ENCODE measurements at regions of chr3 and their contacts with region 1.

Region 1: DNA sequence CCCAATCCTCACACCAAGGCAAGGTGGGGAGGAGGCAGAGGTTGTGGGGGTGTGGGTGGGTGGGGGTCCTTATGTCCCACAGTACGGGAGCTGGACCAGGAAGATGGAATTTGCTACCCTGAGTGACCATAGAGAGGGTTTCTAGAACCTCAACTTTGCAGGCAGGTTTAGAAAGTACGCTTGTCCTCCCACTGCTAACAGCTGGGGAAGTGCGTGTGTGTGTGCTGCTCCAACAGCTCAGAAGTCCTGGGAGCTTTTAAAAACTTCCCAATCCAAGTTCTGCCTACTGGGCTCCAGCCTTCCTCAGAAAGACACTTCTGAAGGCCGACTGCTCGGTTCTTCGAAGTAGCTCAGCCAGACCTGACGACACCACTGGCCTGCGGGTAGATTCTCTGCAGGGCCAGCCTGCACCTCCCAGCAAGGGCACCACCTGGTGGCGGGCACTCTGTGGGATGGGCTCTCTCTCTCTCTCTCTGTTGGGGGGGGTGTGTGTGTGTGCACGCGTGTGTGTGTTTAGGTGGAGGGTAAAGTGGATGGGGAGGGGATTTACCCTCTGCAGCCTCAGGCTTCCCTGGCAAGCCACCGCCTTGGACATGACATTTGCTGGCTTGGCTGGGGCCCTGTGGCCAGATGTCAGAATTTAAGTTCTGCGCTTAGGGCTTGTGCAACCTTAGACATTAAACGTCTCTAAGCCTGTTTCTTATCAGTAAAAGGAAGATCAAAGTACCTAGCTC is 15.6 kb downstream of the TMEM158 start:
- DNase-seq: peak; percentile 85
- H3K4me3 Mint-ChIP-seq: no peak overlapping the region
- H3K27ac Mint-ChIP-seq: no peak overlapping the region
- H3K4me1 Mint-ChIP-seq: peaks cover 44% of the 10 kb centered on the region
- H3K27me3 Mint-ChIP-seq: peaks cover 29% of the 10 kb centered on the region

Region 2: DNA sequence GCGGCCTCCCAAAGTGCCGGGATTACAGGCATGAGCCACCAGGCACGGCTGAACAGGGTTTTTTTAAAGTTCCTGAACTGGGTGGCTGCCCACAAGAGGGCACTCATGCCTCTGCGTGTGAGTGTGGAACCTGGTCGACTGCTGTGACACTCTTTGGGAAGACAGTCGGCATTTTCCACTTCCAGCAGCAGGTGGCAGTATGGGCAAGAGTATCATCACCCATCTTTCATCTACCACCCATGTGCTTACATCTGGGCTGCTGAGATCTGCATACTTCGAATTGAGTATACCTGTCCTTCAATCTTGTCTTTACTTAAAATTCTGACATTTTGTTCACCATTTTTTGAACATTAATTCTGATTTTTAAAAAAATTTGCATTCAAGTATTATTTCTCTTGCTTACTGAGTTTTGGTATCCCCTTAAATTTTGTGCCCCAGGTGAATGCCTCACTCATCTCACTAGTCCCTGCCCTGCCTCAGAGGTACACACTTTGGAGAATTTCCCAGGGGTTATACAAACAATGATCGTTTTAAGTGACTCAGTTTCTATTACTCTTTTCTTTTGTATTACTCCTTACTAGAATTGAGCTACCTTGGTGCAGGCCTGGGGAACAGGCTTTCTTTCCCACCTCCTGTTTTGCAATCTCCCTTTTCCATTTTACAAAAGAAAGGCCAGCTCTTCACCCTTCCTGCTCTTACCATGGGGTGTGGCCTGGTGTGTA is 172.6 kb before region 1 on chr3:
- CTCF ChIA-PET with region 1: interaction called, 103 read pairs
- POLR2A ChIA-PET with region 1: interaction called, 3 read pairs
- DNase-seq: peak; percentile 96
- H3K4me3 Mint-ChIP-seq: peak overlapping the region; percentile 9
- H3K27ac Mint-ChIP-seq: peak overlapping the region; percentile 46
- H3K4me1 Mint-ChIP-seq: peaks cover 57% of the 10 kb centered on the region
- H3K27me3 Mint-ChIP-seq: peaks cover 31% of the 10 kb centered on the region

Region 3: GRCh38 chr3:45043728-45044299 is 166.7 kb before region 1 on chr3:
- CTCF ChIA-PET with region 1: interaction called, 103 read pairs
- POLR2A ChIA-PET with region 1: interaction called, 3 read pairs
- DNase-seq: no peak
- H3K4me3 Mint-ChIP-seq: no peak overlapping the region
- H3K27ac Mint-ChIP-seq: no peak overlapping the region
- H3K4me1 Mint-ChIP-seq: peaks cover 29% of the 10 kb centered on the region
- H3K27me3 Mint-ChIP-seq: peaks cover 33% of the 10 kb centered on the region

Region 4: DNA sequence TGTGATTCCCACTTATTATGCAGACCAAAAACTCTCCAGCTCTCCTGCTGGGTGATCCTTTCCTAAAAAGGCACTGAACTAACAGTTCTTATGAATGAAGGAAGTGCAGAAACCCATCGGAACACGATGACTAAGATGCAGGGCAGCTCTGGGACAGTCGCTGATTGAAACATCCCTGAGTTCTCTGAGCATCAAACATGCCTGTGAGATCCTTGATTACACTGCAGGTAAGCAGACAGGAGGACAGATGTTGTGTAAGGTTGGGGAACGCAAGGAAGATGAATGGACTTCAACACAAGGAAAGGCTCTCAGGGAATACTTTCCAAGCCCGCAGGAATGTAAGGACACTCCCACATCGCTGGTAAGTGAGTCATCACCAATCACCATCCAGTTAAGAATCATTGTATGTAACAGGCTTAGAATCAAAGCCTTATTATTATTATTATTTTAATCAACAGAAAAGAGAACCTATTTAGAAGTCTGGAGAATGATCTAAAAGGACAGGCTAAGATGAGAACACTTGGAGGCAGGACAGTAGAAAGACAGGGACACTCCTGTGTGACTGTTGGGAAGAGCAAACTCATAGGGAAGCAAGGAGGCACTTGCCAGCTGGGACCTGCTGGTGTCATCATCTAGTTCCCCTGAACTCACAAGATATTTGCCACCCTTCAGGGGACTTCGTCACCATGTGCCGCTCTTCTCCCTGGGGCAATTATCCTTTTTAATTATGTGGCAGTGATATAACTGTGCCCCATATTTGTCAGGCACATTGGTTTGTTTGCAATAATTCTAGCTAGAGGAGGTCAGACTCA is 10.4 kb before region 1 on chr3:
- CTCF ChIA-PET with region 1: interaction called, 10 read pairs
- POLR2A ChIA-PET with region 1: no interaction called
- DNase-seq: no peak
- H3K4me3 Mint-ChIP-seq: no peak overlapping the region
- H3K27ac Mint-ChIP-seq: no peak overlapping the region
- H3K4me1 Mint-ChIP-seq: peaks cover under 1% of the 10 kb centered on the region
- H3K27me3 Mint-ChIP-seq: peaks cover 50% of the 10 kb centered on the region